HCT116 (cell line): ENCODE measurements at regions of chr3 and their contacts with region 1.

Region 1: DNA sequence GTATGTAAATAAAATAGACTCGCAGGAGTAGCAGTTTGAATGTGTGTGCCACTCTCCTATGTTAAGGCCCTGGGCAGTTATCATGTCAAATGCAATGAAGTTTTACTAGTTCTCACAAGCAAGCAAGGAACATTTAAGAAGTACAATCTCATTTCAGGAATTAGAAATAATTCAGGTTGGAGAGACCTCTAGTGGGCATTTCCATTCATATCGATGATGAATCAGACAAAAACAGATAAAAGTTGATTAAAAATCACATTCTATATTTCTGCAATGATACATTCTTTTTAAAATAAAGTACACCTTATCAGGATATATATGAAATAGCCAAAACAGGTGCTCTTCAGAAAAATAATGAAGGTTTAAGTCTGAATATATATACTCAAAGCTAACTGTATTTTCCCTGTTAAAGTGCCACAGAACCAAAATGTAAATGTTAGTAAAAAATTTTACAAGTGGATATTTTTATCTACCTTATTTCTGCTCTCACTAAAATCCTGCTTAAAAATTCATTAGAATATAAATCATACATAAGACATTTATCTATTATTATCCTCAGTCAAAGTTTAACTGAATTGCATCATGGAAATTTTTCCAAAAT is 492.4 kb upstream of the FRG2C start:
- DNase-seq: no peak
- ATAC-seq: no peak
- H3K4me3 ChIP-seq: no peak overlapping the region
- H3K27ac ChIP-seq: no peak overlapping the region
- H3K4me1 ChIP-seq: no peaks in the 10 kb centered on the region
- H3K27me3 ChIP-seq: no peaks in the 10 kb centered on the region
- CTCF ChIP-seq: peak in 2 of 3 experiments; percentile 26 to 49; a peak in 3 of 6 replicates
- POLR2A ChIP-seq: no peak
- RAD21 ChIP-seq: peak; percentile 26

Region 2: GRCh38 chr3:73508330-73508954 is 1663.3 kb before region 1 on chr3:
- CTCF ChIA-PET with region 1: no interaction called
- POLR2A ChIA-PET with region 1: no interaction called
- RAD21 ChIA-PET with region 1: no interaction called
- intact Hi-C with region 1: loop called (anchors 2 kb)
- DNase-seq: peak; percentile 27
- ATAC-seq: peak; percentile 80
- H3K4me3 ChIP-seq: no peak overlapping the region
- H3K27ac ChIP-seq: no peak overlapping the region
- H3K4me1 ChIP-seq: no peaks in the 10 kb centered on the region
- H3K27me3 ChIP-seq: peaks cover 19% of the 10 kb centered on the region; the same call in 1 of the 2 replicates
- CTCF ChIP-seq: peak; percentile 33 to 80 (median 72); a peak in 5 of 6 replicates
- POLR2A ChIP-seq: no peak
- RAD21 ChIP-seq: peak; percentile 46

Region 3: DNA sequence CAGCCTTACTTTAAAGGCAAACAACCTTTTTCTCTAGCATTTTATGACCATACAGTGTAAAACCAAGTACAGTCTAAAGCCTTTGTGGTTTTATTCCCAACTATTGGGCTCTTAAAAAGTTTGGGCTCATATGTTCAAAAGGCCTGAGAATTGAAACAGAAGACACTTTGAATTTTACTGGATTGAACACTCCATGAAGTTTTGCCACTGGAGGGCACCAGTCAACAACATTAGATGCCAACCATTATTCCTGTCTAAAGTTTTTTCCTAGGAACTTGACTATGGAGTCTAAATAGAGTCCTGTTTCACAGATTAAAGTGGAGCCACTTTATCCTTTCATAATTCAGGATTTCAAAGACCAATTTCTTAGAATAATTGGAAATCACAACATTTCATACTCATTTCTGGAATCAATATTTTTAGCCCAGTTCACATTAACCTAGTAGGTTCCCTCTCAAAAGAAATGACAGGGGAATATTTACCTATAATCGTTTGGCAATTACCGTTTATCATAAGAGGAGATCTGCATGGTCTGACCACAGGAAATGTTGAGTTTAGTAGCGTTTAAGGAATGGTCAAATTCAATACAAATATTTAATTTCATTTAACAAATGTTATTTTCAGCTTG is 1302.9 kb before region 1 on chr3:
- CTCF ChIA-PET with region 1: no interaction called
- POLR2A ChIA-PET with region 1: no interaction called
- RAD21 ChIA-PET with region 1: no interaction called
- intact Hi-C with region 1: loop called (anchors 5 kb)
- DNase-seq: no peak
- ATAC-seq: no peak
- H3K4me3 ChIP-seq: no peak overlapping the region
- H3K27ac ChIP-seq: no peak overlapping the region
- H3K4me1 ChIP-seq: no peaks in the 10 kb centered on the region
- H3K27me3 ChIP-seq: no peaks in the 10 kb centered on the region
- CTCF ChIP-seq: peak in 2 of 3 experiments; percentile 19 to 46; a peak in 4 of 6 replicates
- POLR2A ChIP-seq: no peak
- RAD21 ChIP-seq: peak; percentile 27; the same call in 1 of the 2 replicates

Region 4: GRCh38 chr3:74515451-74515850 is 656.3 kb before region 1 on chr3:
- CTCF ChIA-PET with region 1: no interaction called
- POLR2A ChIA-PET with region 1: no interaction called
- RAD21 ChIA-PET with region 1: no interaction called
- intact Hi-C with region 1: no loop called
- DNase-seq: no peak
- ATAC-seq: no peak
- H3K4me3 ChIP-seq: no peak overlapping the region
- H3K27ac ChIP-seq: no peak overlapping the region
- H3K4me1 ChIP-seq: no peaks in the 10 kb centered on the region
- H3K27me3 ChIP-seq: no peaks in the 10 kb centered on the region
- CTCF ChIP-seq: no peak
- POLR2A ChIP-seq: no peak
- RAD21 ChIP-seq: no peak

Region 5: GRCh38 chr3:76582632-76583378 is 1411.1 kb after region 1 on chr3:
- CTCF ChIA-PET with region 1: no interaction called
- POLR2A ChIA-PET with region 1: no interaction called
- RAD21 ChIA-PET with region 1: no interaction called
- intact Hi-C with region 1: no loop called
- DNase-seq: no peak
- ATAC-seq: no peak
- H3K4me3 ChIP-seq: no peak overlapping the region
- H3K27ac ChIP-seq: no peak overlapping the region
- H3K4me1 ChIP-seq: no peaks in the 10 kb centered on the region
- H3K27me3 ChIP-seq: no peaks in the 10 kb centered on the region
- CTCF ChIP-seq: no peak
- POLR2A ChIP-seq: no peak
- RAD21 ChIP-seq: no peak